ENCODE measurements at regions of chrX and their contacts with region 1.

Region 1: DNA sequence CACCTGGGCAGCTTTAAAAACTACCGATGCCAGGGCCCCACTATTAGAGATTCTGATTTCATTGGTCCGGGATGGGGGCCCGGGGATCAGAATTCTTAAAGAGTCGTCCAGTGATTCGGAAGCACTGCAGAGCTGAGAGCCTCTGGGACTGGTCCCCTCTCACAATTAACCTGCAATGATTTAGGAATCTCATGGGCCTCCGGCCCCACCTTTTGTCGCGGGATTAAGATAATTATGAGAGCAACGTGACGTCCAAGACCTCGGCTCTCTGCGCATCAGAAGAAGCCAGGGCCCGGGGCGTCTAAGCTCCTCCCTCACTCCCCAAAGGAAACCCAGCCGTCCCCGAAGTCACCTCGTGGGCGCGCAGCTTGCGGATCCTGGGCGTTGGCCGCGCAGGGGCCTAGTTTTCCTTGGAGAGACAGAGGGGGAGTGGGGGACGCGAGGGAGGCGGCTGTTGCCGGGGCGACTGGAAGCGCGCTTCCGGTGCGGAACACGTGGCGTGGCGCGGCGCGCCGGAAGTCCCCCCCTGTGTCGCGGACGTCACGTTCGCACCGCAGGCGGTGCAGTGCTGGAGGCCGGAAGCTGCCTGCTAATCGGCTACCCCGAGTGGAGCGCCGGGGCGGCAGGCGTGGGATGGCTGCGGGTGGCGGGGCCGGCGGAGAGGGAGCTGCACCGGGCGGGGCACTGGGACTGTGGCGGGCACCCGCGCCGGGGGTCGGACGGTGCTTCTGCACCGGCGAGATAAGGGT is at the start of gene GEMIN8:
- DNase-seq: peak; percentile 72 to 83
- H3K4me3 ChIP-seq: peak within 1 kb of the TSS; percentile 53 to 87 (median 77)
- H3K27ac ChIP-seq: peak within 1 kb of the TSS; percentile 85 to 87
- H3K4me1 ChIP-seq: no peaks in the 10 kb centered on the region
- H3K27me3 ChIP-seq: peaks cover 0 to 9% of the 10 kb centered on the region in 2 donors
- CTCF ChIP-seq: no peak
- POLR2A ChIP-seq: no peak
- total RNA-seq, gene GEMIN8: 23.8 to 38.6 (median 26.9) TPM

Region 2: DNA sequence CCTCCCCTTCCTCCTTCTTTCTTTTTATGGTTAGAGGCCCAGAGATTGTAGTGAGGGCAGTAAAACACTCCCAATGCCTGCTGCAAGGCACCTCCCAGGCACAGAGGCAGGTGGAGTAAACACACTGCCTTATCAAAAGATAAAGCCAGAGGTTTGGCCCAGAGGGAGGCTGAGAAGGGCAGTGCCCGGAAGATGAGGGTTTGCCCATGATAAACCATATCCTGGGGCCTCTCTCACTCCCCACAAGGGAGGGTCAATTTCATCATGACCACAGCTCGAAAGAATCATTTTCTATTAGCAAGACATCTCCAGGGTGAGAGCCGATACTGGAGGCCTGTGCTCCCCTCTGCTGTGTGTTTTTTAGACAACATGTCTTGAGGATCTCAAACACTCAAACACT is 886.7 kb before region 1 on chrX:
- intact Hi-C with region 1: no loop called
- DNase-seq: no peak
- H3K4me3 ChIP-seq: no peak overlapping the region
- H3K27ac ChIP-seq: no peak overlapping the region
- H3K4me1 ChIP-seq: no peaks in the 10 kb centered on the region
- H3K27me3 ChIP-seq: peaks cover 0 to 16% of the 10 kb centered on the region in 2 donors
- CTCF ChIP-seq: no peak
- POLR2A ChIP-seq: no peak

Region 3: DNA sequence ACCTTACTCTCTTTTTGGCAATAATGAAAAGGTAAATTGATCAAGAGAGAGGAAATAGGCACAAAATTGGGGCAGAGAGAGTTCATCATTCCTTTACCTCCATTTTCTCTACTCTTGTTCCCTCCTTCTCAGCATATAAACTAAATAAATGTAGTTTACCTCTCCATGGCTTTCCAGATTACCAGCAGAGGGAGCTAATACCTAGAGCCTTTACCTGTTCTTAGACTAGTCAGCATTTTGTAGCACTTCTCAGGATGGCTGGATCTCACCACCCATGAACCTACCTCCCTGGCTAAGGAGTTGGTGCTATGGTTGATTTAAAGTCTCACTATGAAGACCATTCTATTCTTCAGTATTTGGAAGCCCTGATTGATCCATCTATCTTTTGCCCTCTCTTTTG is 279.4 kb before region 1 on chrX:
- intact Hi-C with region 1: loop called (anchors 10 kb)
- DNase-seq: no peak
- H3K4me3 ChIP-seq: no peak overlapping the region
- H3K27ac ChIP-seq: peak overlapping the region in 1 of 2 donors; percentile 5
- H3K4me1 ChIP-seq: no peaks in the 10 kb centered on the region
- H3K27me3 ChIP-seq: no peaks in the 10 kb centered on the region
- CTCF ChIP-seq: peak; percentile 25 to 70 (median 33)
- POLR2A ChIP-seq: no peak

Region 4: DNA sequence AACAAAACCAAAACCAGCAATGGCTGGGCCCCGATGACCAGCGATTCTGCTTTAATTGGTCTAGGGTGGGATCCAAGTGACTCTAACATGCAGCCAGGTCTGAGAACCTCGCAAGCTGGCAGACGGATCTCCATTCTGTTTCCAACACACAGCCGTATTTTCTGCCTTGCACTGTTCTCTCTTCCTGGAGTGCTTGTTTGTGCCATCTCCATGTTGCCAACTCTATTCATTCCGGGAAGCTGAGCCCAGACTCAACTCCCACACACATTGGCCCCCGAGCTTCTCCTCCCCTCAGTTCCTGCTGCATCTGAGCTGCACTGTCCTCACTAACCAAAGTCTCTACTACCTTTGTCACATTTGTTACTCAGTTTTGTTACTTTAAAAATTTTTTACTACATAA is 35.5 kb before region 1 on chrX:
- intact Hi-C with region 1: no loop called
- DNase-seq: no peak
- H3K4me3 ChIP-seq: no peak overlapping the region
- H3K27ac ChIP-seq: peak overlapping the region; percentile 8 to 23
- H3K4me1 ChIP-seq: no peaks in the 10 kb centered on the region
- H3K27me3 ChIP-seq: peaks cover 0 to 8% of the 10 kb centered on the region in 2 donors
- CTCF ChIP-seq: no peak
- POLR2A ChIP-seq: no peak

Region 5: DNA sequence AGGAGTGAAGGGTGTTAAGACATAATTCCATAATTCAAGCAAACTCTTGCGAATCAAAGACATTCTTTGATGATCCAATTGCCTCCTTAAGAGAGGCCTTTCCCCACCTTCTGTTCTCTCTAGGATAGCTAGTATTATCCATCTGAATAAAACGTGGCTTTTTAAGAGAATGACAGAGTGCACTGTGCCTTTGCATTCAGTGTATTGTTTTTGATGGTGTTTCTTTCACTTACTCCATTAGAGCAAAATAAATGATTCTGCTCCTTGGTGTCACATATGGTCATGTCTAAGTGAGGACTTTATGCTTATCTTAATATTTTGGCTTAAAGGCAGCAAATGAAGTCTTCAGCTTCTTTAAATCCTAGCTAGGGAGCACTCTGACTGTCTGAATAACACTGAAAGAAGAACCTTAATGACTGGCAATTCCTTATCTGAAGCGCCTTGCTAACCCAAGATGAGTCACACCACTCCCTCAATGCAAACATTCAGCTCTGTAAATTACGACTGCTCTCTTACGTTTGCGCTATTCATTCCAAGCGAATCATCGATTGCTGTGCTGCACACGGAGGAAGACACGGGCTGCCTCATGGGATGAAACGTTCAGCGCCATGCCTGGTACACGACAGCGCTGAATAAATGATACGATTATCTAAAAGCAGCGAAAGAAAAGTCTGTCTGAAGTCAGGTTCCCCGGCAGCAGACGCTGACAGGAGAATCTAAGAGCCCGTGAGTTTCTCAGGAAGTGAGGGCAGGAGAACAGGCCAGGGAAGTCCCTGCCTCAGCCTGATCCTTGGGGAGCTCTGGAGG is 35.2 kb after region 1 on chrX:
- intact Hi-C with region 1: no loop called
- DNase-seq: no peak
- H3K4me3 ChIP-seq: no peak overlapping the region
- H3K27ac ChIP-seq: no peak overlapping the region
- H3K4me1 ChIP-seq: no peaks in the 10 kb centered on the region
- H3K27me3 ChIP-seq: peaks cover 0 to 52% of the 10 kb centered on the region in 2 donors
- CTCF ChIP-seq: no peak
- POLR2A ChIP-seq: no peak